MCF 10A (cell line): ENCODE measurements at regions of chr20 and their contacts with region 1.

Region 1: DNA sequence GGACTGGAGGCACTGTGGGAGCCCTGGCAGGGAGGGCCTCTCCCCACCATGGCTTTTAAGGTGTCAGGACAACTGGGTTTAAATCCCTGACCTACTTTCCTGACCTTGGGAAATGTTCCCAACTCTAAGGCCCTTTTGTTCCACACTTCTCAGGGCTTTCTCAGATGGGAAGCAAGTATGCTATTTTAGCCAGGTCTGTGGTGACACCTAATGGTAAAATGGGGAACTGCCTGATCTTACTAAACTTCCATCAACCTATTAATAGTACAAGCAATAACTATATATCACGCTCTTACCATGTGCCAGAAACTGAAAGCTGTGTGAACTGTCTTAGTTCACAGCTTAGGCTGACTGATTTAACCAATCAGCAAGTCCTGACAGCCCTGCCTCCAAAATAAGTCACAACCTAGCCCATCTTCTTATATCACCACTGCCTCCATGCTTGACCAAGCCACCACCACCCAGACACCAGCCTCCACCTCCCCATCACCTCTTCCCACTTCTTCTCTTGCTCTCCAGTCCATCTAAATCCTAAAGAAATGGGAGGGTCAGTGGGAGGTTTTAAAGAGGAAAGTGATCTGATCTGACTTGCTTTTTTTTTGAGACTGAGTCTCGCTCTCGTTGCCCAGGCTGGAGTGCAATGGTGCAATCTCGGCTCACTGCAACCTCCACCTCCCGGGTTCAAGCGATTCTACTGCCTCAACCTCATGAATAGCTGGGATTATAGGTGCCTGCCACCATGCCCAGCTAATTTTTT is 6.9 kb upstream of the BLCAP start:
- DNase-seq: peak; percentile 84
- H3K4me3 Mint-ChIP-seq: no peak overlapping the region
- H3K27ac Mint-ChIP-seq: peak overlapping the region; percentile 19
- H3K4me1 Mint-ChIP-seq: peaks cover 18% of the 10 kb centered on the region
- H3K27me3 Mint-ChIP-seq: no peaks in the 10 kb centered on the region
- CTCF ChIP-seq: peak; percentile 79

Region 2: DNA sequence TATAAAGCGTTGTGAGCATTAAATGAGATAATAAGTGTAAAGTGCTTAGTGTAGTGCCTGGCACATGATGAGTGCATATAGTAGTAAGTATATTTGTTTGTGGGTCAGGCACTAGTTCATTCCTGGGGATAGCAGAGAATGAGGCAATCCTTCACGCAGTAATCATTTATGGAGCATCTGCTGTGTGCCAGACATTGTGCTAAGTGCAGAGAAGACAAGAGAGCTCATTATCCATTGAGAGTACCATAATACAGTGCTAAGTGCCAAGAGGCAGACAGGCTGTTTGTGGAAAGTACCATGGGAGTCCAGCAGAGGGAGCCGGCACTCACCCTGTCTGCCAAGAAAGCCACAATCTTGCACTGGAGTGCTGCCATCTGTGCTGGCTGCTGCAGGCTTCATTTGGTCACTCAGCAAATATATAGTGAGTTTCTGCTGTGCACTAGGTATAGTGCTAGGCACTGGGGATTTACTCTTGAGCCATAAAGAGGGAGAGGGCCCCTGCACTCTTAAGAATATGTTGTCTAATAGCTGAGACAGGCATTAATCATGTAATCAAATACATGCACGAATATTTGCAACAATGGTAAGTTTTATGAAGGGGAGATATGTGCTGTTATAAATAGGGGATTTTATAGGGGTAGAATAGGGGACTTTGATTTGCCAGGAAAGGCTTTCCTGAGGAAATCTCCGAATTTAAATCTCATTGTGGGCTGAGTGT is 342.3 kb before region 1 on chr20:
- CTCF ChIA-PET with region 1: interaction called, 191 read pairs
- POLR2A ChIA-PET with region 1: interaction called, 3 read pairs
- intact Hi-C with region 1: loop called (anchors 2 kb)
- DNase-seq: peak; percentile 82
- H3K4me3 Mint-ChIP-seq: no peak overlapping the region
- H3K27ac Mint-ChIP-seq: no peak overlapping the region
- H3K4me1 Mint-ChIP-seq: peaks cover 35% of the 10 kb centered on the region
- H3K27me3 Mint-ChIP-seq: no peaks in the 10 kb centered on the region
- CTCF ChIP-seq: peak; percentile 80

Region 3: GRCh38 chr20:37270576-37271420 is 263.8 kb before region 1 on chr20:
- CTCF ChIA-PET with region 1: interaction called, 175 read pairs
- POLR2A ChIA-PET with region 1: interaction called, 7 read pairs
- intact Hi-C with region 1: loop called (anchors 1 kb)
- DNase-seq: peak; percentile 64
- H3K4me3 Mint-ChIP-seq: no peak overlapping the region
- H3K27ac Mint-ChIP-seq: no peak overlapping the region
- H3K4me1 Mint-ChIP-seq: peaks cover 15% of the 10 kb centered on the region
- H3K27me3 Mint-ChIP-seq: no peaks in the 10 kb centered on the region
- CTCF ChIP-seq: no peak

Region 4: DNA sequence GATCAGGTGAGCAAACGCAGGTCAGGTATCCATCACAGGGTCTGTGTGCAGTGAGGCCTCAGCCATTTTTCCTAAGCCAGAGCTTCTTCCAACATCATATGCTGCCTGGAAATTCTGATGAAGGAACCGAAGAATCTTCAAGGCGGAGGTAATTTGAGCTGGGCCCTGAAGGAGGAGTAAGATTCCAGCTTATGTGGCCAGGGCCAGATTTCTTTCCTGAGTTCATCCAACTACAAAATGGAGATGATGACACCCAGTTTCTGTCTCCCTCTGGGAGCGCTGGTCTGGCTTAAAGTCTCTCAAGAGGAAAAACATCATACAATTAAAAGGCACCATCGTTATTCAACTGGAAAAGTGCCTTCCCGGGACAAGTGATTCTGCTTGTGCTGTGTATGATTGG is 252.0 kb before region 1 on chr20:
- CTCF ChIA-PET with region 1: interaction called, 70 read pairs
- POLR2A ChIA-PET with region 1: interaction called, 184 read pairs
- intact Hi-C with region 1: no loop called
- DNase-seq: peak; percentile 60
- H3K4me3 Mint-ChIP-seq: no peak overlapping the region
- H3K27ac Mint-ChIP-seq: no peak overlapping the region
- H3K4me1 Mint-ChIP-seq: peaks cover 5% of the 10 kb centered on the region
- H3K27me3 Mint-ChIP-seq: no peaks in the 10 kb centered on the region
- CTCF ChIP-seq: peak; percentile 56

Region 5: DNA sequence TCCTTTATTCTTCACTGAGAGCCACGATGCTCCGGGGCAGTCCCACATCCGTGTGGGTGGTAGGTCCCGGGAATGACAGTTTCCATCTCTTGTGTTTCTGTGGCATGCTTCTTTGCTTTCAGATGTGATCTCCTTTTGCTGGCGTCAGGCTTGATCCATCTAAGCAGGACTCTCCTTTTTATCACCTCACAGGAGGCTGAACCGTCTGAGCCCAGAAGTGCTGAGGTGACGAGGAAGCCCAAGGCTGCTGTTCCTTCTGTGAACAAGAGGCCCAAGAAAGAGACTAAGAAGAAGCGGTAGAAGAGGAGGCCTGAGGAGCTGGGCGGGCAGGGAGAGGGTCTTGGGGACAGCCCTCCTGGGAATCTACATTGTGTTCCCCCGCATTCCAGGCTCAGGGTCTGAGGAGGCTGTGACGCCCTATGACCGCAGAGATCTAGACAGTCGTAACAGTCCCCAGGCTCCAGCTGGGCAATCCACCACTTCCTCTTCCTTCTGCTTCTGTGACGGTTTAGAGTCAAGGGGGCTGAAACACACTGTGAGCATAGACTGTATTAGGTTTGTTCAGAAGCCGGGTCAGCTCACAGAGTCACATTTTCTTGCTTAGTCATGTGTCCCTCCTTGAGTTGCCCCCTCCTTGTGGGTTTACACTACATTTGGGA is 218.3 kb before region 1 on chr20:
- CTCF ChIA-PET with region 1: no interaction called
- POLR2A ChIA-PET with region 1: no interaction called
- intact Hi-C with region 1: no loop called
- DNase-seq: no peak
- H3K4me3 Mint-ChIP-seq: no peak overlapping the region
- H3K27ac Mint-ChIP-seq: peak overlapping the region; percentile 50
- H3K4me1 Mint-ChIP-seq: peaks cover 8% of the 10 kb centered on the region
- H3K27me3 Mint-ChIP-seq: no peaks in the 10 kb centered on the region
- CTCF ChIP-seq: no peak